ENCODE measurements at regions of chr7 and their contacts with region 1.

Region 1: DNA sequence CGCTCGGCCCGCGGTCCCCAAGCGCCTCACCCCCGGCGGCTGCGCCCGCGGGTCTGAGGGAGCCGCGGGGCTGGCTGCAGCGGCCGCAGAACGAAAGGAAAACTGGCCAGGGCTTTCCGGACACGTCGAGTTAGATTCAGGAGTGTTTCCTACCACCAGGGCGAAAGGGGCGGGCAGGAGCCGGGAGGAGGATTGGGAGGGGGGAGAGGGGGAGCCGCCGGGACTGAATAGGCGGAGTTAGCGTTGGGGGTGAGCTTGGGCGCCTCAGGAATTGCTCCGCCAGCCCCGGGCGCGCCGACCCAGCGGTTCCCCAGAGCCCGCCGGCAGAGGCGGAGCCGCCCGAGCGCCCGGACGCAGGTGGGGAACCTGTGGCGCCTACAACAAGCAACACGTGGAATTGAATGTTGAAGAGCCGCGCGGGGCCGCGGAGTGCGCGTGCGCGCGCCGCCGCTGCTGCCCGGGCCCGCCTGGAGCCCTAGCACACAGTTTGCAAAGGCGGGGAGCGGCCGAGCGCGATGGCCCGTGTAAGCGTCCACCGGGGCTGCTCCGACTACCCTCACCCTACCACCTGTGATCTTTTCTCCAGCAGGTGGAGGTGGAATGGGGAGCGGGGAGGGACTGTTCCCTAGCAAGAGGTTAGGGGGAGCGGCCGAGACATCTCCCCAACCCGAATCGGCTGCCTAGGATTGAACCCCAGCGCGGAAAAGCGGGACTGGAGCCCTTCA is at the start of gene CADPS2:
- DNase-seq: peak; percentile 77 to 92
- H3K4me3 ChIP-seq: peak within 1 kb of the TSS; percentile 92
- H3K27ac ChIP-seq: peak within 1 kb of the TSS; percentile 51
- H3K4me1 ChIP-seq: peaks cover 19% of the 10 kb centered on the region
- H3K27me3 ChIP-seq: no peaks in the 10 kb centered on the region
- CTCF ChIP-seq: no peak
- total RNA-seq, gene CADPS2: 9.9 and 11.9 TPM in 2 replicates

Region 2: GRCh38 chr7:121832347-121832746 is 1054.2 kb before region 1 on chr7:
- CTCF ChIA-PET with region 1: no interaction called
- POLR2A ChIA-PET with region 1: no interaction called
- intact Hi-C with region 1: no loop called
- DNase-seq: no peak
- H3K4me3 ChIP-seq: no peak overlapping the region
- H3K27ac ChIP-seq: no peak overlapping the region
- H3K4me1 ChIP-seq: no peaks in the 10 kb centered on the region
- H3K27me3 ChIP-seq: no peaks in the 10 kb centered on the region
- CTCF ChIP-seq: no peak

Region 3: DNA sequence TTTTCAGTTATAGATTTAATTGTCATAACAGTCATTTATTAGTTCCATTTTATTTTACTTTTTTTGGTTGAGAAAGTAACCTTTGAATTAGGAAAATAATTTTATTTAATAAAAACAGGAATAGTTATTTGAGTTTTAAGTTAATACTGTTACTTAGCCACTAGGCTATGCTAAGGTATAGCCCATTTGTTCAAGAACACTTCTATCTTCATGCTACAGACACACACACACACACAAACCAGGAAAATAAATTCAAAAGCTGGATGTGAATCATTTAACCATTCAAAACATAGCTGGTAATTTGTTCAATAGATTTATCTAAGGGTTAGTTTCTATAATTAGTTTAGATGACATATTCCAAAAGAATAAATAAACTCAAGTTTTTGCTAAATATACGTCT is 336.0 kb before region 1 on chr7:
- CTCF ChIA-PET with region 1: no interaction called
- POLR2A ChIA-PET with region 1: no interaction called
- intact Hi-C with region 1: loop called (anchors 10 kb)
- DNase-seq: no peak
- H3K4me3 ChIP-seq: no peak overlapping the region
- H3K27ac ChIP-seq: no peak overlapping the region
- H3K4me1 ChIP-seq: no peaks in the 10 kb centered on the region
- H3K27me3 ChIP-seq: no peaks in the 10 kb centered on the region
- CTCF ChIP-seq: 0 out of 2 replicates have a peak, but pooled peaks have one; percentile 31

Region 4: DNA sequence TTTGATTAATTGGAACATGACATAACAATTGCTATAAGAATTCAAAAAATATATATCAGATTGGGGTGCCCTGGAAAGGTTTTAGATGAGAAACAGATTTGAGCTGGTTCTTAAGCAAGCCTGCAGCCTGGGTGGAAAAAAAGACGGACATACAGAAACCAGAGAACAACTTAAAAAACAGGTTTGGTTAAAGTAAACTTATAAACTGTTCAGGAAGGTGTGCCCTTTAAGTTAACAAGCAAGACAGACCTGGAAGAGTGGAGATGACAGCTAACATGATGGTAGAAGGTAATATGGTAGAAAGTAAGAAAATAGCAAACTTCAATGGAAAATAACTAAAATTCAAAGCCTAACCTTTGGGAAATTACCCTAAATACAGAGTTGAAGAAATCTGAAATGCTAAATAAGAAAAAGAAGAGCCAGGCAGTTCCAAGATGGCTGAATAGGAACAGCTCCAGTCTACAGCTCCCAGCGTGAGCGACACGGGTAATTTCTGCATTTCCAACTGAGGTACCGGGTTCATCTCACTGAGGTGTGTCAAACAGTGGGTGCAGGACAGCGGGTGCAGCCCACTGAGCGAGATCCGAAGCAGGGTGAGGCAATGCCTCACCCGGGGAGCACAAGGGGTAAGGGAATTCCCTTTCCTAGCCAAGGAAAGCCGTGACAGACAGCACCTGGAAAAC is 52.5 kb before region 1 on chr7:
- CTCF ChIA-PET with region 1: no interaction called
- POLR2A ChIA-PET with region 1: no interaction called
- intact Hi-C with region 1: loop called (anchors 2 kb)
- DNase-seq: no peak
- H3K4me3 ChIP-seq: 0 out of 2 replicates have a peak overlapping the region, but pooled peaks have one; percentile 7
- H3K27ac ChIP-seq: no peak overlapping the region
- H3K4me1 ChIP-seq: no peaks in the 10 kb centered on the region
- H3K27me3 ChIP-seq: no peaks in the 10 kb centered on the region
- CTCF ChIP-seq: no peak

Region 5: DNA sequence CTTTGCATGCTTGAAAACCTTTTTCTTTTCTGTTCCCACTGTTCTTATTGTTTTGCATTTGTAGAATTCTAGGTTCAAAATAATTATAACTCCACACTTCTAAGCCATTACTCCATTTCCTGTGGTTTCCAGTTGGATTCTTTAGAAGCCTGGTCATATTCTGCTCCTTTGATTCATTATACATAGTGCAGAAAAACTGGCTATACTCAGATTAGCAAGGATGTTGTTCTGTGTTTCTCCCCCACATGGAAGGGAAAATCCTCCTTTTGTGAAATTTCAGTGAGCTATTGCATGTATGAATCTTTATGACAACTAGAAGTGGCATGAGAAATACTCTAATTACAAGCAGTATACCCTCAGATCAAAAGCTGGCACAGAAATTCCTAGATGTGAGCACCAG is 233.8 kb after region 1 on chr7:
- CTCF ChIA-PET with region 1: no interaction called
- POLR2A ChIA-PET with region 1: no interaction called
- intact Hi-C with region 1: no loop called
- DNase-seq: no peak
- H3K4me3 ChIP-seq: no peak overlapping the region
- H3K27ac ChIP-seq: no peak overlapping the region
- H3K4me1 ChIP-seq: no peaks in the 10 kb centered on the region
- H3K27me3 ChIP-seq: no peaks in the 10 kb centered on the region
- CTCF ChIP-seq: no peak

Region 6: DNA sequence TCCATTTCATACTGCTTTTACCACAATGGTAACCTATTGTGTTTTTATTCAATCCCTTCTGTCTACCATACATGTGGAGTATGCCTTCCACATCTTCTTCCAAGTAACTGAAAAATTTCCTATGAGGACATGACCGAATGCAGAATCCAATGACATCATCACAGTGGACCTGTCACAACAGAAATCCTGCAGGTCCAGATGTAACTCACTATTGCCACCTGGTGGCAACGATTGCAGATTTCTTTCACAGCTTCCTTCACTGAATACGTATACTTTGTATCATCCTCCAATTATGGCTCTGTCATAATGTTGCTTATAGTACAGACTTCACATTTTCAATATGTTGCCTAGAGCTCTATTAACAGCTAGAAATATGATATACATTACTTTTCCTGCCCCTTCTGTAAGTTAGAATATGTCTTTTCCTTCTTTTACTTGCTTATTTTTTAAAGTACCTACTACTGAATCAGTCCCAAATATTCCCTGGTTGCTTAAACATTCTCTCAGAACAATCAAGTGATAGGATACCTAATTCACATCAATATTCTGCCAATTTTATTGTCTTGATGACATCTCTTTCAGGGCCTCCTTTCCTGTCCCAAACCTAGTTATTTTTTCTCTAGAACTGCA is 267.8 kb after region 1 on chr7:
- CTCF ChIA-PET with region 1: no interaction called
- POLR2A ChIA-PET with region 1: no interaction called
- intact Hi-C with region 1: loop called (anchors 5 kb)
- DNase-seq: peak; percentile 65 to 73
- H3K4me3 ChIP-seq: no peak overlapping the region
- H3K27ac ChIP-seq: no peak overlapping the region
- H3K4me1 ChIP-seq: no peaks in the 10 kb centered on the region
- H3K27me3 ChIP-seq: no peaks in the 10 kb centered on the region
- CTCF ChIP-seq: peak; percentile 84

Region 7: GRCh38 chr7:123534383-123535260 is 648.1 kb after region 1 on chr7 and contains the start of gene IQUB:
- CTCF ChIA-PET with region 1: no interaction called
- POLR2A ChIA-PET with region 1: no interaction called
- intact Hi-C with region 1: loop called (anchors 5 kb)
- DNase-seq: peak; percentile 82 to 97
- H3K4me3 ChIP-seq: peak within 1 kb of the TSS; percentile 96
- H3K27ac ChIP-seq: no peak within 1 kb of the TSS
- H3K4me1 ChIP-seq: peaks cover 23% of the 10 kb centered on the region
- H3K27me3 ChIP-seq: no peaks in the 10 kb centered on the region
- CTCF ChIP-seq: no peak
- total RNA-seq, gene IQUB: 0.33 and 0.98 TPM in 2 replicates